ENCODE measurements at regions of chr19 and their contacts with region 1.

Region 1: GRCh38 chr19:48582168-48582567 is 24.4 kb upstream of the SPACA4 start:
- DNase-seq: no peak
- H3K4me3 ChIP-seq: no peak overlapping the region
- H3K27ac ChIP-seq: no peak overlapping the region
- H3K27me3 ChIP-seq: no peaks in the 10 kb centered on the region
- CTCF ChIP-seq: no peak

Region 2: GRCh38 chr19:48492925-48493717 is 89.0 kb before region 1 on chr19:
- intact Hi-C with region 1: loop called (anchors 2 to 5 kb)
- DNase-seq: peak; percentile 66 to 93 (median 82)
- H3K4me3 ChIP-seq: peak overlapping the region in 56 of 59 donors; percentile 15 to 67 (median 49)
- H3K27ac ChIP-seq: peak overlapping the region in 18 of 59 donors; percentile 6 to 70 (median 50)
- H3K27me3 ChIP-seq: no peaks in the 10 kb centered on the region
- CTCF ChIP-seq: no peak

Region 3: GRCh38 chr19:48506138-48506733 is 75.9 kb before region 1 on chr19:
- intact Hi-C with region 1: loop called in 1 of 2 experiments (anchors 5 kb)
- DNase-seq: no peak
- H3K4me3 ChIP-seq: no peak overlapping the region
- H3K27ac ChIP-seq: no peak overlapping the region
- H3K27me3 ChIP-seq: peaks cover 0 to 2% (median 0%) of the 10 kb centered on the region in 45 donors
- CTCF ChIP-seq: peak in 50 of 56 donors; percentile 11 to 56 (median 36)

Region 4: GRCh38 chr19:48646001-48646721 is 64.0 kb after region 1 on chr19 and contains the start of gene CA11:
- intact Hi-C with region 1: no loop called
- DNase-seq: peak; percentile 78 to 93 (median 86)
- H3K4me3 ChIP-seq: peak within 1 kb of the TSS; percentile 43 to 86 (median 71)
- H3K27ac ChIP-seq: peak within 1 kb of the TSS; percentile 85 to 99 (median 96)
- H3K27me3 ChIP-seq: no peaks in the 10 kb centered on the region
- CTCF ChIP-seq: peak; percentile 75 to 98 (median 91)
- total RNA-seq, gene CA11: 107 to 396 (median 272) TPM